ENCODE measurements at regions of chr10 and their contacts with region 1.

Region 1: DNA sequence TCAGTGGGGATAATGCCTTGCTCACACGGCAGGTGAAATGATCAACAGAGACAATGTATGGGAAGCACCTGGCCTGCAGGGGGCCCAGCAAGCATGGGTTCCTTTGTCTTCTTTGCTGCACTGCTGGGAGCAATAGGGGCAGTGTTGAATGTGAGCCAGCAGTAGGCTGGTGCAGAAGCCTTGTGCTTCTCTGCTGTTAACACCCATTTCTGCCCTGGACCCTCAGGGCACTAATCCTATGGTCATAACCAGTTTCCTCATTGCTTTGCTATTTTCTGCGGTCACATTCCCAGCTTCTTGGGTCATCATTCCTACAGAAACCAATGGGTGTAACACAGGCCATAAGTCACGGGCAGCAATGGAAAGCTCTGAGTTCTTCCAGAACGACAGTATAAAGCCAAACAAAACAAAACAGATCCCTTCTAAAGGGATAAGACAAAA is 10.9 kb upstream of the LGI1 start:
- DNase-seq: peak; percentile 83 to 84
- H3K4me3 ChIP-seq: no peak overlapping the region
- H3K4me3 Mint-ChIP-seq: no peak overlapping the region
- H3K27ac Mint-ChIP-seq: no peak overlapping the region
- H3K4me1 ChIP-seq: peaks cover 9% of the 10 kb centered on the region; the same call in 1 of the 2 replicates
- H3K4me1 Mint-ChIP-seq: peaks cover 5% of the 10 kb centered on the region
- H3K27me3 ChIP-seq: no peaks in the 10 kb centered on the region; the same call in 1 of the 2 replicates
- H3K27me3 Mint-ChIP-seq: no peaks in the 10 kb centered on the region
- CTCF ChIP-seq: peak; percentile 70 to 86

Region 2: GRCh38 chr10:93702211-93703001 is 44.5 kb before region 1 on chr10 and contains the start of gene FRA10AC1:
- CTCF ChIA-PET with region 1: interaction called, 5 read pairs
- POLR2A ChIA-PET with region 1: no interaction called
- intact Hi-C with region 1: loop called (anchors 2 kb)
- DNase-seq: peak; percentile 94 to 95
- H3K4me3 ChIP-seq: peak within 1 kb of the TSS; percentile 85
- H3K4me3 Mint-ChIP-seq: no peak within 1 kb of the TSS
- H3K27ac Mint-ChIP-seq: no peak within 1 kb of the TSS
- H3K4me1 ChIP-seq: peaks cover 4% of the 10 kb centered on the region; the same call in 1 of the 2 replicates
- H3K4me1 Mint-ChIP-seq: peaks cover 12% of the 10 kb centered on the region
- H3K27me3 ChIP-seq: no peaks in the 10 kb centered on the region
- H3K27me3 Mint-ChIP-seq: no peaks in the 10 kb centered on the region
- CTCF ChIP-seq: peak; percentile 20 to 54
- total RNA-seq, gene FRA10AC1: 12.5 and 15.1 TPM in 2 replicates

Region 3: DNA sequence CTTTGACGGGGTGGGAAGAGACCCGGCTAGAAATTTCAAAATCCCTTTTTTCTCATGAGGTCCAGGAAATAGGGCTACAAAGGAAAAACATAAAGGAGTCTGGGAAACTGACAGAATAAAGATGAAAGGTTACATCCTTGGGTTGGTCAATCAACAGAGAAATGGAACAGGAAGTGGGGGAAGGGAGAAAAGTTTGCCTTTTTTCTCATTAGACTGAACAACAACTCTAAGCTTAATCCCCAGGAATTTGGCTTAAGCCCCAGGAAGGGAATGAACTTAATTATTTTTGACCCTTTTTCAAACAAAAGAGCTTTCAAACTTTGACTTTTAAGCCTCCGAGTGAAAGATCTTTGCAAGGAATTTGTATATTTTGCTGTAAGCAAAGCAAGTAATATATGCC is 43.6 kb after region 1 on chr10:
- CTCF ChIA-PET with region 1: no interaction called
- POLR2A ChIA-PET with region 1: no interaction called
- intact Hi-C with region 1: loop called (anchors 2 kb)
- DNase-seq: no peak
- H3K4me3 ChIP-seq: no peak overlapping the region
- H3K4me3 Mint-ChIP-seq: no peak overlapping the region
- H3K27ac Mint-ChIP-seq: no peak overlapping the region
- H3K4me1 ChIP-seq: peaks cover 7% of the 10 kb centered on the region
- H3K4me1 Mint-ChIP-seq: peaks cover 7% of the 10 kb centered on the region
- H3K27me3 ChIP-seq: no peaks in the 10 kb centered on the region
- H3K27me3 Mint-ChIP-seq: peaks cover 4% of the 10 kb centered on the region
- CTCF ChIP-seq: no peak

Region 4: GRCh38 chr10:93859049-93859655 is 112.3 kb after region 1 on chr10:
- CTCF ChIA-PET with region 1: interaction called, 5 read pairs
- POLR2A ChIA-PET with region 1: no interaction called
- intact Hi-C with region 1: loop called (anchors 2 kb)
- DNase-seq: peak in 1 of 2 experiments; percentile 12
- H3K4me3 ChIP-seq: no peak overlapping the region
- H3K4me3 Mint-ChIP-seq: no peak overlapping the region
- H3K27ac Mint-ChIP-seq: no peak overlapping the region
- H3K4me1 ChIP-seq: peaks cover 12% of the 10 kb centered on the region
- H3K4me1 Mint-ChIP-seq: no peaks in the 10 kb centered on the region
- H3K27me3 ChIP-seq: no peaks in the 10 kb centered on the region
- H3K27me3 Mint-ChIP-seq: no peaks in the 10 kb centered on the region
- CTCF ChIP-seq: peak; percentile 33 to 53

Measured in Caco-2 (cell line).